Heart right ventricle (tissue), 16 donors: ENCODE measurements at regions of chr14 and their contacts with region 1.

Region 1: DNA sequence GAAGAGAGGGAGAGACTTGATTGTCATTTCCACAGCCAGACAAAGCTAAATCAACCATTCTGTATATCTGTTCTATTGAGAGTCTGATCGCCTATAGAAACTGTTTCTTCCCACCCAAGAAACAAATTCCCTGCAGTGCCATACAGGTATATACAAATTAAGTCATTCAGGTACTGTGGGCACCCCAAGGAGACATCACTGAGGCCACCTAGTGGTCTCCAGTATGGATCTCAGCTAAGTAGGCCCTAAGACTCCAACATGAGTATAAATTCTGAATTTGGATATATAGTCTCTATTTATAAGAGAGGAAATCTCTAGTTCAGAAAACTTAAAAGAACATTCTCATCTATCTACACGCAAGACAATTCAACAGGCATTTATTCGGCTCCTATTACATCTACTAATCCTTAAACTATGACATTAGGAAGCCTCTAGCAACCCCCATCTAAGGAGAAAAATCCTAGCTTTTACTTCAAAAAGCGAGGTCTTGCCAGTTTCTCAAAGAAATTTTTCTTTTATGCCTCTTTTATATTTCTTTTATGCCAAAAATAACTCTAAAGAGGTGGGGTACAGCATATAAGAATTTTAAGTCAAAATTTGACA is 62.6 kb downstream of the DCAF5 start:
- DNase-seq: peak in 1 of 2 donors; percentile 18
- ATAC-seq: peak in 4 of 8 donors; percentile 53 to 63 (median 58)
- H3K4me3 ChIP-seq: no peak overlapping the region
- H3K27ac ChIP-seq: no peak overlapping the region
- H3K4me1 ChIP-seq: peaks cover 0 to 26% (median 23%) of the 10 kb centered on the region in 9 donors
- H3K27me3 ChIP-seq: no peaks in the 10 kb centered on the region
- CTCF ChIP-seq: peak; percentile 30 to 79 (median 72)

Region 2: GRCh38 chr14:68862954-68863594 is 227.2 kb before region 1 on chr14:
- intact Hi-C with region 1: loop called in 2 of 10 experiments (anchors 5 kb)
- DNase-seq: peak; percentile 75 to 82
- ATAC-seq: peak; percentile 33 to 87 (median 78)
- H3K4me3 ChIP-seq: no peak overlapping the region
- H3K27ac ChIP-seq: no peak overlapping the region
- H3K4me1 ChIP-seq: peaks cover 0 to 3% (median 0%) of the 10 kb centered on the region in 9 donors
- H3K27me3 ChIP-seq: no peaks in the 10 kb centered on the region
- CTCF ChIP-seq: peak; percentile 54 to 84 (median 80)

Region 3: DNA sequence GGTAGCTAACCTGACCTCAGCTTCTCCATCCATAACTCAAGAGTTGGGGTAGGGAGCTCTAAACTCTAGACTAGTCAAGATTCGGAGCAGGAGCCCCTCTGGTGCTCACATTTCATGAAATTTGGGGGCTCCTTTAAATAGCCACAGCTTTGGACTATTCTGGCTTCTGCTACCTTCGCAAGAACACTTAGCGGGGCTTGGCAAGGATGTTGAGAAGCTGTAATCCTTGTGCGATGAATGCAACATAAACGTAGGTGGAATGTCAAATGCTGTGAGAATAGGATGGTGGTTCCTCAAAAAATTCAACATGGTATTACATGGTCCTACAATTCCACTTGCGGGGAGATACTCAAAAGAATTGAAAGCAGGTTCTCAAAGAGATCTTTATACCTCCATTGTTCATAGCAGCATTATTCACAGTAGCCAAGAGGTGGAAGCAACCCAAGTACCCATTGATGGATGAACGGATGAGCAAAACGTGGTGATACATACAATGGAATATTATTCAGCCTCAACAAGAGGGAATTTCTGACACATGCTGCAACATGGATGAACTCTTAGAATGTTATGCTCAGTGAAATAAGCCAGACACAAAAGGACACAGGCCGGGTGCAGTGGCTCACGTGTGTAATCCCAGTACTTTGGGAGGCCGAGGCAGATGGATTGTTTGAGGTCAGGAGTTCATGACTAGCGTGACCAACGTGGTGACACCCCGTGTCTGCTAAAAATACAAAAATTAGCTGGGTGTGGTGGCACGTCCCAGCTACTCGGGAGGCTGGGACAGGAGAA is 185.0 kb before region 1 on chr14:
- intact Hi-C with region 1: loop called in 9 of 10 experiments (anchors 5 to 10 kb)
- DNase-seq: no peak
- ATAC-seq: no peak
- H3K4me3 ChIP-seq: no peak overlapping the region
- H3K27ac ChIP-seq: no peak overlapping the region
- H3K4me1 ChIP-seq: peaks cover 0 to 7% (median 0%) of the 10 kb centered on the region in 9 donors
- H3K27me3 ChIP-seq: no peaks in the 10 kb centered on the region
- CTCF ChIP-seq: no peak

Region 4: DNA sequence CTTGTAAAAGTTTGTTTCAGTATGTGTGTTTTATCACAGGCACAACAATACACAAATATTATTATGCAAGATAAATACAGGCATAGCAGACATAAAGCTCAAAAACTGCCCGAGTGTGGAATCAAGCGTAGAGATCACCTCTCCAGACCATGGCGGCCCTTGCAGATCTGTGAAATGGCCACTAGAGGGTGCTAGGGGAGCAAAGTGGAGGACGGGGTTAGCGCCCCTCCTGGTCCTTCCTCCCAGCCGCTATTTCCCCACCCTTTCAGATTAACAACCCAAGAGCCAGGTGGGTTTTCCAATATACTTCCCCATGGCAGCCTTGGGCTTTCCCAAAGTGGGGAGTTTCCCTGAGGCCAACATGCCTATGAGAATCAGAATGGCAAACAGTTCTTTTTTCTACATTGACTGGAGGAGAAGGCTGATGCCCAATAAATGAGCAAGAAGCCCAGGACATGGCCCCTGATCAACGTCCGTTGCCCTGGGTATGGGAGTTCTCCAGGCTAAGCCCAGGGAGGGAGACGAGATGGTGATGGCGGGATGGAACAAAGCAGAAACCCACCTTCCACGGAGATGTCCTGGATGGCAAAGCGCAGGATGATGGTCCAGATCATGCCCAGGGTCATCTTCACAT is 178.6 kb before region 1 on chr14:
- intact Hi-C with region 1: loop called in 9 of 10 experiments (anchors 5 to 10 kb)
- DNase-seq: peak; percentile 73 to 84
- ATAC-seq: peak; percentile 85 to 92 (median 88)
- H3K4me3 ChIP-seq: no peak overlapping the region
- H3K27ac ChIP-seq: peak overlapping the region in 4 of 10 donors; percentile 5 to 36 (median 10)
- H3K4me1 ChIP-seq: peaks cover 0 to 41% (median 9%) of the 10 kb centered on the region in 9 donors
- H3K27me3 ChIP-seq: no peaks in the 10 kb centered on the region
- CTCF ChIP-seq: peak; percentile 95 to 100 (median 99)

Region 5: DNA sequence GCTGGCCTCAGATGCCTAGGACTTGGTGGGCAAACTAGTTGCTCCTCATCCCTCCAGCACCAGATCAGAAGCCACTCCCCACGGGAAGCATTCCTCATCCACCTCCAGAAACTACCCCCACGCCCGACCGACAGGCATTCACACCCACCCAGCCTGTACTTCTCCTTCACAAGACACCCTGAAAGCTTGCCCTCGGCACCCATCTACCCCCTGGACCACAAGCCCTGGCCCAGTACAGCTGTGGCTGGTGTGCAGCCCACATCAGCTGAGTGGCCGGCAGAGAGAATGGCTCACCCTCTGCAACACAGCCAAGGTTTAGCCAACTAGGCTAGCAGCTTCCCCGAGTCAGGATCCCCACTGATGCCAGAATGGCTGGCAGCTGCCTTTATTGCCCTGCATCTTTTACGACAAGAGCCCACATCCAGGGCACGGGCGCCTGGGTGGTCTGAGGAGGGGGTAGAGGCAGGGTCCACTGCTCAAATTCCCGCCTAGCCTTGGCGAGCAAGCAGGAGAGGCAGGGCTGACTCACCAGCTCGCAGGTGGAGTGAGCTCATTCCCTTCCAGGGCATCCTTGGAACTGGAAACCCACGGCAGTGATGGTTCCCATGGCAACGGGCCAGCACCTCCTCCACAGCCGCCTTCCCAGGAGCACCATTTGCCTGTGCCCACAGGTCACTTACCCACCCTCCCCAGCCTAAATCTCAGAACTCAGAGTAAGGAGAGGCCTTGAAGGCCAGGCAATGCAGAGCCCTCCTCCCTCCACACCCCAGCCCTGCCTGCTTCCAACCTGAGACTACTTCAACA is 128.3 kb before region 1 on chr14:
- intact Hi-C with region 1: no loop called
- DNase-seq: no peak
- ATAC-seq: no peak
- H3K4me3 ChIP-seq: no peak overlapping the region
- H3K27ac ChIP-seq: peak overlapping the region in 2 of 10 donors; percentile 29 to 39
- H3K4me1 ChIP-seq: peaks cover 38 to 100% (median 92%) of the 10 kb centered on the region in 9 donors
- H3K27me3 ChIP-seq: no peaks in the 10 kb centered on the region
- CTCF ChIP-seq: no peak

Region 6: GRCh38 chr14:69005432-69006147 is 84.7 kb before region 1 on chr14:
- intact Hi-C with region 1: loop called in 1 of 10 experiments (anchors 10 kb)
- DNase-seq: peak; percentile 29 to 52
- ATAC-seq: peak; percentile 8 to 88 (median 65)
- H3K4me3 ChIP-seq: no peak overlapping the region
- H3K27ac ChIP-seq: peak overlapping the region in 2 of 10 donors; percentile 1 to 59
- H3K4me1 ChIP-seq: peaks cover 0 to 25% (median 0%) of the 10 kb centered on the region in 9 donors
- H3K27me3 ChIP-seq: no peaks in the 10 kb centered on the region
- CTCF ChIP-seq: no peak

Region 7: DNA sequence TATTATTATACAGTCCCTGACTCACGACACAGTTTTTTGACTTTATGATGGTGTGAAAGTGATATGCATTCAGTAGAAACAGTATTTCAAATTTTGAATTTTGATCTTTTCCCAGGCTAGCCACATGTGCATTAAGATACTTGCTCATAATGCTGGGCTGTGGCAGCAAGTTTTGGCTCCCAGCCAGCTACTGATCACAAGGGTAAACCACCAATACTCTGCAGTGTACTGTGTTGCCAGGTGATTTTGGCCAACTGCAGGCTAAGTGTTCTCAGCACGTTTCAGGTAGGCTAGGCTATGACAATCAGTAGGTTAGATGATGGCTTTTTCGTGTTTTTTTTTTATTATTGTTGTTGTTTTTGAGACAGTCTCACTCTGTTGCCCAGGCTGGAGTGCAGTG is 41.8 kb before region 1 on chr14:
- intact Hi-C with region 1: loop called in 1 of 10 experiments (anchors 5 kb)
- DNase-seq: no peak
- ATAC-seq: no peak
- H3K4me3 ChIP-seq: no peak overlapping the region
- H3K27ac ChIP-seq: peak overlapping the region in 8 of 10 donors; percentile 18 to 94 (median 82)
- H3K4me1 ChIP-seq: peaks cover 53 to 100% (median 94%) of the 10 kb centered on the region in 9 donors
- H3K27me3 ChIP-seq: no peaks in the 10 kb centered on the region
- CTCF ChIP-seq: no peak

Region 8: GRCh38 chr14:69101331-69101826 is 11.1 kb after region 1 on chr14:
- intact Hi-C with region 1: no loop called
- DNase-seq: peak in 1 of 2 donors; percentile 48
- ATAC-seq: peak; percentile 61 to 95 (median 80)
- H3K4me3 ChIP-seq: no peak overlapping the region
- H3K27ac ChIP-seq: peak overlapping the region in 2 of 10 donors; percentile 4 to 31
- H3K4me1 ChIP-seq: peaks cover 0 to 10% (median 0%) of the 10 kb centered on the region in 9 donors
- H3K27me3 ChIP-seq: no peaks in the 10 kb centered on the region
- CTCF ChIP-seq: peak in 8 of 9 donors; percentile 24 to 71 (median 60)

Region 9: GRCh38 chr14:69183735-69184134 is 93.4 kb after region 1 on chr14:
- intact Hi-C with region 1: no loop called
- DNase-seq: no peak
- ATAC-seq: no peak
- H3K4me3 ChIP-seq: no peak overlapping the region
- H3K27ac ChIP-seq: no peak overlapping the region
- H3K4me1 ChIP-seq: peaks cover 0 to 4% (median 0%) of the 10 kb centered on the region in 9 donors
- H3K27me3 ChIP-seq: no peaks in the 10 kb centered on the region
- CTCF ChIP-seq: no peak

Region 10: GRCh38 chr14:69708586-69709174 is 618.4 kb after region 1 on chr14:
- intact Hi-C with region 1: no loop called
- DNase-seq: no peak
- ATAC-seq: no peak
- H3K4me3 ChIP-seq: no peak overlapping the region
- H3K27ac ChIP-seq: peak overlapping the region in 1 of 10 donors; percentile 88
- H3K4me1 ChIP-seq: peaks cover 27 to 81% (median 53%) of the 10 kb centered on the region in 9 donors
- H3K27me3 ChIP-seq: no peaks in the 10 kb centered on the region
- CTCF ChIP-seq: peak in 2 of 9 donors; percentile 6 to 11